Naive thymus-derived CD8-positive, alpha-beta T cell (primary cell): ENCODE measurements at regions of chr13 and their contacts with region 1.

Region 1: DNA sequence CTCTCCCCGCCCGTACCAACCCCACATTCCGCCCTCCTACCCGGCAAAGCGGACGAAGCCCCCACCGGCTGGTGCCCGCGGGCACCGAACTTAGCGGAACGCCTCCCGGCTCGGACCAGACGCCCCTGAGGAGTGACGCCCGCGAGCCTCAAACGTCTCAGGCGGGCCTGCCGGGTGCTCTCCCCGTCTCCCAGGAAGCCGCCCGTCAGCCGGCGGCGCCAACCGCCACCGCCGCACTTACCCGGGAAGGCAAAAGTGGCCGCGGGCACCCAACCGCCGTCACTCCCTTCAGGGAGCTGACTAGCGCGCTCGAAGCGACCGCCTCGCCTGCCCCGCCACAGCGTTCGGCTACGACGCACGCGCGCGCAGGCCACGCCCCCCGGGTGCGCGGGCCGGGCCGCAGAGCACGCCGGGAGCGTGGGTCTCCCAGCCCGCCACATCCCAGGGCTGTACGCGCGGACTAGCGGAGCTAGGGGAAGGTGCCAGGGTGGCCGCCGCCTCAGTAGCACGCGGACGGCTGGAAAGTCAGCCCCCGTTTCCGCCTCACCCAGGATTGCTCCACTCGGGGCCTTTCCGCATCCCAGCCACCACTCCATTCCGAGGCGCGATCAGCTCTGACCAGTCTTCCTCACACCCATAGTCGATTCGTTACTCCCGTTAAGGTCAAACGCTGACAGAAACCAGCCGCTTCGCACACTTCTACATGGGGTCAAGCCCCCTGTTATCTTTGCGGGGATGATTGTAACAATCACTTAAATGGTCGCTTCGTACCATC is at the start of gene TEX30:
- DNase-seq: peak; percentile 80 to 90 (median 88)
- ATAC-seq: peak; percentile 94 to 95
- H3K4me3 Mint-ChIP-seq: peak within 1 kb of the TSS; percentile 84 to 96 (median 92)
- H3K27ac Mint-ChIP-seq: peak within 1 kb of the TSS; percentile 90 to 97 (median 92)
- H3K4me1 Mint-ChIP-seq: peaks cover 9 to 49% (median 39%) of the 10 kb centered on the region in 4 donors
- H3K27me3 Mint-ChIP-seq: no peaks in the 10 kb centered on the region
- polyA plus RNA-seq, gene TEX30: 23.8 to 25.0 (median 24.3) TPM

Region 2: GRCh38 chr13:102800145-102801041 is 26.8 kb after region 1 on chr13:
- POLR2A ChIA-PET with region 1: interaction called, 24 read pairs
- DNase-seq: peak; percentile 70 to 89 (median 80)
- ATAC-seq: peak; percentile 83 to 84
- H3K4me3 Mint-ChIP-seq: peak overlapping the region; percentile 85 to 95 (median 90)
- H3K27ac Mint-ChIP-seq: peak overlapping the region; percentile 9 to 84 (median 73)
- H3K4me1 Mint-ChIP-seq: peaks cover 11 to 34% (median 28%) of the 10 kb centered on the region in 4 donors
- H3K27me3 Mint-ChIP-seq: peaks cover 0 to 10% (median 4%) of the 10 kb centered on the region in 5 donors

Region 3: DNA sequence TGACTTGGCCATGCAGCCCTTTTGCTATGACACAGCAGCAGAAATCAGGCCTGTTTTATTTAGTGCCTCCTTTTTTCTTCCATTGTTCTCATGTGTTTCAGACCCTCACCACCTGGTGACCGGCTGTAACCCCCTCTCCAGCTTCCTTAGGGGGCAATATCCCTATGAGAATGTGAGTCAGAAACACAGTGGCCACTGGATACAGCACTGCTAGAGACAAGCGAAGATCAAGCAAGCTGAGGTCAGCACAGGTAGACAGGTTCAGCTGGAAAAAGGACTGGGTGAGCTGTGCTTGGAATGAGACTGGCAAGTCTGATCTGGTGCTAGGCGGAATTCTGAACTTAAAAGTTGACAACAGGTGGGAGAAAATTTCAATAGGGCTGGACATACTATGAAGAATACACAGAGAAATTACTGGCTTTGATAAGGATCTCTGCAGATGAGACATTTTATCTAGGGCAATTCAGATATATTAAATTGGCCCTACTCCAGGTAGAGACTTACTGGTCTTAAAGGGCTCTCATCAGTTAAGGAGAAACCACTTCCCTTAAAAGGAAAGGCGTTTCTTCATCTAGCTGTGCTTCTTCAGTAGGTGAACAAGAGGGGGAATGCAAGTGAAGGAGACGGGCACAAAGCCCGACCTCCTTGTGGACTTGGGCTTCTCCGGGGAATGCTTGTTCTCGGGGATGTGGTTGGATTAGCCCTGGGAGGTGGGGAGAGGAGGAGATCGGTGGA is 155.5 kb after region 1 on chr13:
- POLR2A ChIA-PET with region 1: no interaction called
- DNase-seq: no peak
- ATAC-seq: no peak
- H3K4me3 Mint-ChIP-seq: no peak overlapping the region
- H3K27ac Mint-ChIP-seq: peak overlapping the region in 2 of 10 donors; percentile 4 to 53
- H3K4me1 Mint-ChIP-seq: peaks cover 0 to 2% (median 0%) of the 10 kb centered on the region in 4 donors
- H3K27me3 Mint-ChIP-seq: peaks cover 8 to 54% (median 21%) of the 10 kb centered on the region in 5 donors